RWPE1 (cell line): ENCODE measurements at regions of chr10 and their contacts with region 1.

Region 1: GRCh38 chr10:92573798-92574547 is at the start of gene IDE:
- DNase-seq: peak; percentile 91
- H3K27ac ChIP-seq: peak within 1 kb of the TSS; percentile 94
- CTCF ChIP-seq: peak; percentile 93; the same call in 1 of the 2 replicates

Region 2: DNA sequence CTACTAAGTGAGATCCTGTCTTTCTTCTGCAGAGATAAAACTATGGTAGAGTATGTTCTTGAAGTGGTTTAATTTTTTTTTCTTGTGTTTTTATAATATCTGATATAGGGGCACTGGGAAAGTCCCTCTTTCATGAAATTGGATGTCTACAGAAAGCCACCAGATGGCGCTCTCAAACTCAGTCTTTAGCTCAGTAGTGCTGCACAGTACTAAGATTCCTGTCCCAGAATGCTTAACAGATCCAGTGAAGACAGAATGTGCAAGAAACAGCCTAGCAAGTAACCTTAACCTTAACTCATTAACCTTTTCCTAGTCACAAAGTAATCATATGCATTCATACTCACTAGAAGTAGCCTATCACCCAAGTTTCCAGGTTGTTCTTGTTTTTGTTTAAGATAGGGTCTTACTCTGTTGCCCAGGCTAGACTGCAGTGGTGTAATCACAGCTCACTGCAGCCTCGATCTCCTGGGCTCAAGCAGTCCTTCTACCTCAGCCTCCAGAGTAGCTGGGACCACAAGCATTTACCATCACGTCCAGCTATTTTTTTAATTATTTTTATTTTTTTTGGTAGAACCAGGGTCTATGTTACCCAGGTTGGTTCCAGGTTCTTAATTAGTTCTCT is 56.8 kb before region 1 on chr10:
- CTCF ChIA-PET with region 1: interaction called, 62 read pairs
- POLR2A ChIA-PET with region 1: interaction called, 4 read pairs
- DNase-seq: peak; percentile 55
- H3K27ac ChIP-seq: no peak overlapping the region
- CTCF ChIP-seq: peak; percentile 84

Region 3: DNA sequence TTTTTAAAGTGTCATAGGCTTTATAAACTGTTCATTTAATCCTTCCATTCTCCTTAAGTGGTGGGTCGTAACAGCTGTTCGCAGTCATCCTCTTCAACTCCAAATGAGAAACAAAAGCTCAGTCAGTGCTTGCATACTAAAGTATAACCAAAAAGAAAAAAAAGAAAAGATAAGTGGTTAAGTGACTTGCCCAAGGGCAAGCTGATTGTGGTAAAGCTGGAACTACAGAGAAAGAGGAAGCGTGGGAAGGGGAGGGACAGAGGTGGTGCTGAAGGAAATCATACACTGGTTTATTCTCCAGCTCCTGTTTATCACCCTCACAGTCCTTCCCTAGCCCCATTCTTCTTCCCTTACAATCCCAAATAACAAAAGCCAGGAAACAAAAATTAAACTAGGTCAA is 29.7 kb before region 1 on chr10:
- CTCF ChIA-PET with region 1: interaction called, 10 read pairs
- POLR2A ChIA-PET with region 1: no interaction called
- DNase-seq: no peak
- H3K27ac ChIP-seq: no peak overlapping the region
- CTCF ChIP-seq: no peak

Region 4: GRCh38 chr10:92657024-92657423 is 83.1 kb after region 1 on chr10:
- CTCF ChIA-PET with region 1: no interaction called
- POLR2A ChIA-PET with region 1: no interaction called
- DNase-seq: no peak
- H3K27ac ChIP-seq: no peak overlapping the region
- CTCF ChIP-seq: no peak

Region 5: GRCh38 chr10:92757066-92757710 is 183.2 kb after region 1 on chr10:
- CTCF ChIA-PET with region 1: no interaction called
- POLR2A ChIA-PET with region 1: no interaction called
- DNase-seq: peak; percentile 55
- H3K27ac ChIP-seq: no peak overlapping the region
- CTCF ChIP-seq: no peak